GM12878 (cell line): ENCODE measurements at regions of chr10 and their contacts with region 1.

Region 1: DNA sequence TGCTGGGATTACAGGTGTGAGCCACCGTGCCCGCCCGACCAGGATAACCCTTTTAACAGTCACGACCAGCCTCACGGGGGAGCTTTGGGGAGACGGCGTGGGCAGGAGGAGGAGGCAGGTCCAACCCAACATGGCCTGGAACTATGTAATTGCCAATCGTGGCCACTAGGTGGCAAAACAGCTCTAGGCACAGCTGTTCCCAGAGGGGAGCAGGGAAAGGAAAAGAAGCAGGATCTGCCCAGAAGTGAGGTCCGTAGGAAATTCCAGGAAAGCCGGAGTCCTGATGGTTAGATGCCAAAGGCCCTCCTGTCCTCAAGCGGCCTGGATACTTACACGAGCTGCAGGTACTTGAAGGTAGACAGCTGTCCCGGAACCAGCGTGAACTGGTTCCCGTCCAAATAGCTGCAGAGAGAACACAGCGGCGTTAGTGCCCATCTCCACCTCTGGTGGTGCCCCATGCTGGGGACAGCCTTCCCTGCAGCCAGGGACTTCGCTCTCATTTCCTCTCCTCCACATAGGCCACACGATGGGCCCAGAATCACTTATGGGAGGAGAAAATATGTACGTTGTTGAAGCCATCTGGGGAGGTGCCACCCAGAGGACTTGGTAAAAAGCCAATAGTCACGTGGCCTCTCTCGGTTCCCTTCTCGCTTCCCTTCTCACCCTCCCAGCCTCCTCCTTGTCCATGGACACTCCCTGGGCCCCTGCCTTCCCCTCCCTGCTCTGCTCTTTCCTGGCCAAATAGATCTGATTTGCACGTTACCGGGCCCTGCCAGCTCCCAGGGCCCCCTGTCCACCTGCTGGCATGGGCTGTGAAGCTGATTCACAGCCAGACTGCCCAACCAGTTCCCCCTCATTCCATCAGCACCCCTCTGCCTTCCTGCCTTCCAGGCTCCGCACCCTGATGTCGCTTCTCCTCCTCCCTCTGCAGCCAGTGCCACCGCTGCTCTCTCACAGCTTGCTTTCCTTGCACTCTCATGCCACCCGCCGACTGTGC is 148.1 kb downstream of the SLIT1 start:
- DNase-seq: peak; percentile 34
- ATAC-seq: peak; percentile 96
- H3K4me3 ChIP-seq: peak overlapping the region; percentile 35; the same call in 1 of the 2 replicates
- H3K27ac ChIP-seq: no peak overlapping the region
- H3K4me1 ChIP-seq: peaks cover 7% of the 10 kb centered on the region
- H3K27me3 ChIP-seq: peaks cover 0 to 3% of the 10 kb centered on the region in 2 experiments; a peak in 2 of 4 replicates
- CTCF ChIP-seq: peak; percentile 78 to 95 (median 87)
- EP300 ChIP-seq: no peak
- POLR2A ChIP-seq: no peak
- RAD21 ChIP-seq: peak; percentile 71

Region 2: DNA sequence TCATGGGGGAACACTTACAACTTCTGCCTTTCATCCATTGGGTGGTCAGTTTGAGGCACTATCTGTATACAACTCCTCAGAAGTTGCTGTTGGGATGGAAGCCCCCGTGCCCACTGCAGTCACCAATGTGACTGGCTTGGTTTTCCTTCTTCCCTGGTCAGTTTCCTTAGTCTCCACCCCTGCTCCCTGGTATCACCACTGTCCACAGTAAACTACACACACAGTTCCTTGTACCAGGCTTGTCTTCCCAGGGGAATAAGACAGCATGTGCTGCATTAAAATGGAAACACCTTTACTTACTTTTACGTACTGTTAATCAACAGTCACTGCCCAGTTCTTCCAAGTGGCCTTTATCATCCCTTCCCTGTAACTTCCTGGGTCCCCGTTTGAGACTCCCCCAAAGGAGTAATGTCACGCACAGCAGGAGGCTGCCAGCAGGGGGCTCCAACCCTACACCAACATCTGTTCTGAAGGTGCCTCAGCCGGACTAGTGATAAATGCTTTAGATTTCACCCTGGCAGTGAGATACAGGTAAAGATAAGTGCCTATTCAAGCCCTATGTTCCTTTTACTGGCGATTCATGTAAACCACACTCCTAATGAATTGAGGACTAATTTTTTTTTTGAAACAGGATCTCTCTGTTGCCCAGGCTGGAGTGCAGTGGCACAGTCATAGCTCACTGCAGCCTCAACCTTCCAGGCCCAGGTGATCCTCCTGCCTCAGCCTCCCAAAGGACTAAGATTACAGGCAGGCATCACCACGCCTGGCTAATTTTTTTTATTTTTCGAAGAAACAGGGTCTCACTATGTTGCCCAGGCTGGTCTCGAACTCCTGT is 272.0 kb before region 1 on chr10:
- CTCF ChIA-PET with region 1: interaction called, 12 read pairs
- POLR2A ChIA-PET with region 1: no interaction called
- RAD21 ChIA-PET with region 1: interaction called, 3 read pairs
- SMC1A ChIA-PET with region 1: interaction called, 5 read pairs
- in situ Hi-C with region 1: no loop called
- intact Hi-C with region 1: no loop called
- DNase-seq: no peak
- ATAC-seq: peak; percentile 94
- H3K4me3 ChIP-seq: no peak overlapping the region
- H3K27ac ChIP-seq: no peak overlapping the region
- H3K4me1 ChIP-seq: peaks cover 15% of the 10 kb centered on the region
- H3K27me3 ChIP-seq: no peaks in the 10 kb centered on the region
- CTCF ChIP-seq: peak; percentile 87 to 93 (median 89)
- EP300 ChIP-seq: no peak
- POLR2A ChIP-seq: no peak
- RAD21 ChIP-seq: peak; percentile 87

Region 3: DNA sequence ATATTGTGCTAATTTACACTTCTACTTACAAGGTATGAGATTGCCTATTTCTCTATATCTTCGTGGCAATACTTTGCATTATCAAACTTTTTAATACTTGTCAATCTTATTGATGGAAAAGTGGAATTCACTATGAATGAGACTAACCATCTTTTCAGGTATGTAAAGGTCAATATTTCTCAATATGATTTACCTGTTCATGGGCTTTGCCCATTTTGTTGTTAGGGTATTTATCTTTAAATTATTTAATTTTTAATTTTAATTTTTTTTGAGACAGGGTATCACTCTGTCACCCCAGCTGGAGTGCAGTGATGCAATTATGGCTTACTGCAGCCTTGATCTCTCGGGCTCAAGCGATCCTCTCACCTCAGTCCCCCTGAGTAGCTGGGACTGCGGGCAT is 253.4 kb before region 1 on chr10:
- CTCF ChIA-PET with region 1: no interaction called
- POLR2A ChIA-PET with region 1: no interaction called
- RAD21 ChIA-PET with region 1: no interaction called
- SMC1A ChIA-PET with region 1: no interaction called
- in situ Hi-C with region 1: no loop called
- intact Hi-C with region 1: no loop called
- DNase-seq: no peak
- ATAC-seq: no peak
- H3K4me3 ChIP-seq: no peak overlapping the region
- H3K27ac ChIP-seq: no peak overlapping the region
- H3K4me1 ChIP-seq: peaks cover 1% of the 10 kb centered on the region; the same call in 1 of the 2 replicates
- H3K27me3 ChIP-seq: no peaks in the 10 kb centered on the region
- CTCF ChIP-seq: no peak
- EP300 ChIP-seq: no peak
- POLR2A ChIP-seq: no peak
- RAD21 ChIP-seq: no peak

Region 4: GRCh38 chr10:96935148-96935547 is 102.5 kb before region 1 on chr10:
- CTCF ChIA-PET with region 1: no interaction called
- POLR2A ChIA-PET with region 1: no interaction called
- RAD21 ChIA-PET with region 1: no interaction called
- SMC1A ChIA-PET with region 1: no interaction called
- in situ Hi-C with region 1: no loop called
- intact Hi-C with region 1: no loop called
- DNase-seq: no peak
- ATAC-seq: no peak
- H3K4me3 ChIP-seq: no peak overlapping the region
- H3K27ac ChIP-seq: no peak overlapping the region
- H3K4me1 ChIP-seq: no peaks in the 10 kb centered on the region
- H3K27me3 ChIP-seq: no peaks in the 10 kb centered on the region
- CTCF ChIP-seq: no peak
- EP300 ChIP-seq: no peak
- POLR2A ChIP-seq: no peak
- RAD21 ChIP-seq: no peak

Region 5: GRCh38 chr10:96984541-96985131 is 53.0 kb before region 1 on chr10:
- CTCF ChIA-PET with region 1: interaction called, 28 read pairs
- POLR2A ChIA-PET with region 1: no interaction called
- RAD21 ChIA-PET with region 1: interaction called, 6 read pairs
- SMC1A ChIA-PET with region 1: interaction called, 3 read pairs
- in situ Hi-C with region 1: no loop called
- intact Hi-C with region 1: no loop called
- DNase-seq: no peak
- ATAC-seq: peak; percentile 86
- H3K4me3 ChIP-seq: peak overlapping the region; percentile 38; the same call in 1 of the 2 replicates
- H3K27ac ChIP-seq: peak overlapping the region; percentile 30; the same call in 1 of the 2 replicates
- H3K4me1 ChIP-seq: peaks cover 7% of the 10 kb centered on the region; the same call in 1 of the 2 replicates
- H3K27me3 ChIP-seq: no peaks in the 10 kb centered on the region
- CTCF ChIP-seq: no peak
- EP300 ChIP-seq: no peak
- POLR2A ChIP-seq: no peak
- RAD21 ChIP-seq: no peak

Region 6: GRCh38 chr10:97072851-97073665 is 35.4 kb after region 1 on chr10:
- CTCF ChIA-PET with region 1: interaction called, 33 read pairs
- POLR2A ChIA-PET with region 1: no interaction called
- RAD21 ChIA-PET with region 1: interaction called, 19 read pairs
- SMC1A ChIA-PET with region 1: interaction called, 12 read pairs
- in situ Hi-C with region 1: no loop called
- intact Hi-C with region 1: no loop called
- DNase-seq: peak; percentile 13
- ATAC-seq: peak; percentile 94
- H3K4me3 ChIP-seq: no peak overlapping the region
- H3K27ac ChIP-seq: no peak overlapping the region
- H3K4me1 ChIP-seq: no peaks in the 10 kb centered on the region
- H3K27me3 ChIP-seq: peaks cover 0 to 4% of the 10 kb centered on the region in 2 experiments; a peak in 2 of 4 replicates
- CTCF ChIP-seq: peak; percentile 94 to 96 (median 95)
- EP300 ChIP-seq: no peak
- POLR2A ChIP-seq: no peak
- RAD21 ChIP-seq: peak; percentile 97

Region 7: DNA sequence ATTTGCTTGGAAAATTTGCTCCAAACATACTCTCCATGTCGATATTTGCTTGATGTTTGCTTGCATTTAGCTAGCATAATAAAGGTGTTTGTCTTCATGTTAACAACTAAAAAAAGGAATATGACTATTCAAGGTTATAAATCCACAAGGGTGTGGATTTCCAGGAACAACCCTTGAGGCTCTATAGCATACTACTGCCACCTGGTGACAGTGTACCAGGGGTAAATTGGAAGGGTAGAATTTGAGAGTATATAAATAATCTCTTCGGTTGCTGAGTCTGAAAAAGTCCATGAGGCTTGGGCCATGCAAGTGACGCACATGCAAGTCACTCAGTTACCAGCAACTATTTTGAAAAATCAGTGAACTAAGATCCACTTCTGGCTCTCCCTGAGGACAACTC is 79.7 kb after region 1 on chr10:
- CTCF ChIA-PET with region 1: interaction called, 21 read pairs
- POLR2A ChIA-PET with region 1: no interaction called
- RAD21 ChIA-PET with region 1: interaction called, 6 read pairs
- SMC1A ChIA-PET with region 1: interaction called, 3 read pairs
- in situ Hi-C with region 1: no loop called
- intact Hi-C with region 1: no loop called
- DNase-seq: no peak
- ATAC-seq: peak; percentile 65
- H3K4me3 ChIP-seq: no peak overlapping the region
- H3K27ac ChIP-seq: no peak overlapping the region
- H3K4me1 ChIP-seq: no peaks in the 10 kb centered on the region
- H3K27me3 ChIP-seq: no peaks in the 10 kb centered on the region; a peak in 2 of 4 replicates
- CTCF ChIP-seq: peak in 2 of 3 experiments; percentile 25 to 56; a peak in 3 of 6 replicates
- EP300 ChIP-seq: no peak
- POLR2A ChIP-seq: no peak
- RAD21 ChIP-seq: peak; percentile 47

Region 8: DNA sequence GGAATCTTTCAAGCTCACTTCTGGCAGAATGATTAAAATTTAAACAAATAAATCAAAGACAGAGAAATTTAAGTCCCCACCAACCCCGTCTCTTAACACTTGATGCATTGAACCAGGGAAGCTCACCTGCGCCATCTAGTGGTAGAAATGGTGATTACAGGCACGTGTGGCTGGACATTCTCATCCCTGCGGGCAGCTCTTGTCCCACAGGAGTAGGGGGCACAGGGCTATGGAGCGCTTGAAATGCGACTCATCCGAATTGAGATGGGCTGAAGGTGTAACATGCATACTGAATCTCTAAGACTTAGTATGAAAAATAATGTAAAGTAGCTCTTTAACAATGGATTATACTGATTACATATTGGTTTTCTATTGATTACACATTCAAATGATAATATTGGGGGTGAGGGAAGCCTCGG is 172.9 kb after region 1 on chr10:
- CTCF ChIA-PET with region 1: interaction called, 67 read pairs
- POLR2A ChIA-PET with region 1: no interaction called
- RAD21 ChIA-PET with region 1: interaction called, 18 read pairs
- SMC1A ChIA-PET with region 1: interaction called, 29 read pairs
- in situ Hi-C with region 1: no loop called
- intact Hi-C with region 1: loop called (anchors 1 kb)
- DNase-seq: peak; percentile 37
- ATAC-seq: peak; percentile 91
- H3K4me3 ChIP-seq: no peak overlapping the region
- H3K27ac ChIP-seq: no peak overlapping the region
- H3K4me1 ChIP-seq: peaks cover 3% of the 10 kb centered on the region
- H3K27me3 ChIP-seq: no peaks in the 10 kb centered on the region
- CTCF ChIP-seq: peak; percentile 88 to 94 (median 92)
- EP300 ChIP-seq: no peak
- POLR2A ChIP-seq: no peak
- RAD21 ChIP-seq: peak; percentile 94

Region 9: DNA sequence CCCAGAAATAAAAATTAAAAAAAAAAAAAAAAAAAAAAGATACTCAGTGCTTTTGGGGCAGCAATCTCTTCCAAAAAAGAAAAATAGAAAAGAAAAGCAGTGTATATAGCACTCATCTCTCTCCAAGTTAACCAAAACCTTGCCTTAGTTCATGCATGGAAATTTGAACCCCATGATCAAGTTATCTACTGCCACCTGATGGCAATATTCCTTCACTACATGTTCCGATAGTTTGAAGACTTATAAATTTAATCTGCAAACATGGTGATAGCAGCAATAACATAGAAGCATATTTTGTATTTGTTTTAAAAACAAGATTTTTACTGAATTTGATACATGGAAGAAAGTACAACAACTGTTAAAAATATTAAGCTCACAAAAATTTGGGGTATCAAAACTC is 196.7 kb after region 1 on chr10:
- CTCF ChIA-PET with region 1: interaction called, 15 read pairs
- POLR2A ChIA-PET with region 1: no interaction called
- RAD21 ChIA-PET with region 1: interaction called, 6 read pairs
- SMC1A ChIA-PET with region 1: interaction called, 6 read pairs
- in situ Hi-C with region 1: no loop called
- intact Hi-C with region 1: loop called (anchors 1 kb)
- DNase-seq: no peak
- ATAC-seq: peak; percentile 39; the same call in 2 of the 3 replicates
- H3K4me3 ChIP-seq: no peak overlapping the region
- H3K27ac ChIP-seq: no peak overlapping the region
- H3K4me1 ChIP-seq: no peaks in the 10 kb centered on the region
- H3K27me3 ChIP-seq: no peaks in the 10 kb centered on the region
- CTCF ChIP-seq: peak; percentile 36 to 54 (median 50); a peak in 5 of 6 replicates
- EP300 ChIP-seq: no peak
- POLR2A ChIP-seq: no peak
- RAD21 ChIP-seq: peak; percentile 66